ENCODE measurements at regions of chr15 and their contacts with region 1.

Region 1: DNA sequence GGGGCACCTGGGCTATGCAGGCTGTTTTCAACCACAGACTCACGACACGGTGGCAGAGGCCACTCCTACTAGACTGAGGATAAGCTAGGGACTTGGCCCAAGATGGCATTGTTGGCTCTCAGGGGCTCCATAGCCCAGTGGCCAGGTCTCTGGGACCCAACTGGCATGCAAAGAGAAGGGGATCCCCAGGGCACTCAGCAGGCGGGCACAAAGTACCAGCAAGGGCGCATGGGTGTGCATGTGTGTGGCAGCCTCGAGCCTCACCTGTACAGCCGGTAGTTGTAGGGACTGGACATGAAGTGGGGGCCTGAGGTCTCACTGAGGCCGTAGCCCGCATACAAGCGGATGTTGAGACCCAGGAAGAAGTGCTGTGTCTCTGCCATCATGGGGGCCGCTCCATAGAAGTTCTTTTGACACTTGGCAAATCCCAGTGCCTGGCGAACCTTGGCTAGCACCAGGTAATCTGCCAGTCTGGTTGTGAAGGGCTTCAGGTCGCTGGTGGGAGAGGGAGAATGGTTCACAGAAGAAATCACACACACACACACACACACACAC is 30.2 kb downstream of the IDH3A start:
- DNase-seq: peak in 4 of 42 donors; percentile 7 to 34 (median 24)

Region 2: DNA sequence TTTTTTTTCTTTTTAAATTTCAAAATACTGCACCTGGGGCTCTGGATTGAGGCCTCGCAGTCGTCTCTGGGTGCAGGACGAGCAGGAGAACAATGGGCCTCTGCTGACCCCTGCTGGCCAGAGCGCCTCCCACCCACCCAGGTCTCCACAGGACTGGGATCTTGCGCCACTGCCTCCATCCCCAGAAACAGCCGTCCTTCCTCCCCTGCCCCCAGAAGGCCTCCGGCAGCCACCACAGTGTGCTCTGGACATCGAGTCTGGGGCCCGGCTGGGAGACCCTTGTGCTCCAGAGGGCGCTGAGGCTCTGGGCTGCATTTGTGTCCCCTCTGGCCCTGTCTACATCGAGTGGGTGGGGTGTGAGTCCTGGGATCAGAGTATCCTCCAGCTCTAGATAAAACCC is 61.6 kb after region 1 on chr15:
- intact Hi-C with region 1: loop called (anchors 2 kb)
- DNase-seq: peak; percentile 80 to 97 (median 92)

Region 3: DNA sequence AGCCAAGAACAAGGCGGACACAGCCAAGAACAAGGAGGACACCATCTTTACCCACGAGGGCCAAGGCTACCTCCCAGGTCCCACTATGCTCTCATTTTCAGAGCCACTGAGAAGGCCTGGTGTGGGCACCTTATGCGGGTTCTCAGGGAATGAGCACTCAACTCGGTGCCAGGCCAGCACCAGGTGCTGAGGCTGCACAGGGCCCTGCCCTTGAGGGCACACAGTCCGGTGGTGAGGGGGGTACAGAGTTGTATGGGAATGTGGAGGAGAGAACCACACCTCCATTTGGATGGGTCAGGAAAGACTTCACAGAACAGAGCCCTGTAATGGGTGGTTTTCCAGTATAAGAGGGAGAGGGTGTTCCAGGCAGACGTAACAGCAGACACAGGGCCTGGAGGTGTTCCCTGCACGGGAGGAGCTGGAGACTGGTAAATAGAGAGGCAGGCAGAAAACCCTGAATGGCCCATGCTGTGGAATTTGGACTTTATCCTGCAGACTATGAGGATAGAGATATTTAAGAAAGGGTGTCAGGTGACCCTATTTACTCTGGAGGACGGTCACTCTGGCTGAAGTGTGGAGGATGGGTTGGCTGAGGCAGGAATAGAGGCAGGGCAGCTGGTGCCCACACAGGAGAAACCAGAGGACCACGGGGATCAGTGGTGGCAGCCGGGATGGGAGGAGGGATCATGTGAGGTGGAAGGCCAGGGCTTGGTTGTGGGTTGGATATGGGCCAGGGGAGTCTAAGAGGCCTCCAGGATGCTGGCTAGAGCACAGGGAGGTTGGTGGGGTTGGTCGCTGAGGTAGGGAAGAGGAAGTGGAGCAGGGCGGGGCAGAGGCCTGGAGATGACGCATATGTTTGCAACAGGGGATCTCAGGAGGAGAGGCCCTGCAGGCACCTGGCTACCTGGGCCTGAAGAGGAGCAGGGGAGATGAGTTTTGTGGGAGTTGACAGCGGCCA is 195.4 kb after region 1 on chr15:
- intact Hi-C with region 1: no loop called
- DNase-seq: peak in 2 of 42 donors; percentile 10 to 19